A549 (cell line): ENCODE measurements at regions of chr1 and their contacts with region 1.

Region 1: DNA sequence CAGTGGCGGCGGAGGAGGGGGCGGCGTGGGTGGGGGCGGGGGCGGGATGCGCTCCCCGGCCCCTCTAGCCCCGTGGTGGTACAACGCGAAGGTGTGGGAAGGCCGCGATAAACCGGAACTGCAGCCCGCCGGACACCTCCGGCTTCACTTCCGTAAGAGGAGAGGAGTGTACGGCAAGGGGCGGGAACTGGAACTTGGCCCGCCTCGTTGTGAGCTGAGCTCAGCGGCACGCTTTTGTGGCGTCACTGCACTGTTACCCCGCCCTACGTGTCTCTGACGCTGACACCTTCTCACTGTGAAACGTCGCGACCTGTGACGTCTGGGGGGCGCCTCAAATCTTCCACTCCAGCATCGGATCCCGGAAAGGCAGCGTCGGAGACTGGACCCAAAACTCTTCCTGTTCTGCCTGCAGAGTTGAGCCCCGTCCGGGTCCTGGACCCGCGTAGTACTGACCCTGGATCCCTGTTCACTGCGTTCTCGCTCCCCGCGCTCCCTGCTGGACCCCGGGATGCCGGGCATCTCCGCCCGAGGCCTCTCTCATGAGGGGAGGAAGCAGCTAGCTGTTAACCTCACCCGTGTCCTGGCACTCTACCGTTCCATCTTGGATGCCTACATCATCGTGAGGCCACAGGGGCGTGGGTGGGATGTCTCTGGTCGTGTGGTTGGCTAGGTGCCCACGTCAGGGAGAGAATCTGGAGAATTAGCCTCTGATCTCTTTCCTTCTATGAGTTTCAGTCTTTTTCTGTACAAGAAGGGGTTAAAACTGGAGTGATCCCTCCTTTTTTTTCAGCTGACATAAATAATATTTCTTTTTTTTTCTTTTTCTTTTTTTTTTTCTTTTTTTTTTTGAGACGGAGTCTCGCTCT is at the start of gene ISG20L2:
- DNase-seq: peak; percentile 94 to 99
- ATAC-seq: peak; percentile 87 to 89
- H3K4me3 ChIP-seq: peak within 1 kb of the TSS; percentile 89
- H3K27ac ChIP-seq: peak within 1 kb of the TSS; percentile 93
- H3K4me1 ChIP-seq: peaks cover 35% of the 10 kb centered on the region
- CTCF ChIP-seq: no peak
- EP300 ChIP-seq: no peak
- POLR2A ChIP-seq: peak; percentile 29
- RAD21 ChIP-seq: no peak
- polyA plus RNA-seq, gene ISG20L2: 42.5 and 55.7 TPM in 2 replicates

Region 2: GRCh38 chr1:156338180-156338973 is 390.5 kb before region 1 on chr1 and contains the starts of genes CCT3 and TSACC:
- CTCF ChIA-PET with region 1: no interaction called
- POLR2A ChIA-PET with region 1: no interaction called
- DNase-seq: peak; percentile 99 to 100
- ATAC-seq: peak; percentile 94 to 95
- H3K4me3 ChIP-seq: peak within 1 kb of the TSS; percentile 75
- H3K27ac ChIP-seq: peak within 1 kb of the TSS; percentile 89 to 95
- H3K4me1 ChIP-seq: peaks cover 16% of the 10 kb centered on the region; the same call in 2 of the 3 replicates
- CTCF ChIP-seq: no peak
- EP300 ChIP-seq: no peak
- POLR2A ChIP-seq: peak; percentile 87
- RAD21 ChIP-seq: no peak
- polyA plus RNA-seq, gene CCT3: 528 and 530 TPM in 2 replicates
- polyA plus RNA-seq, gene TSACC: 3.9 and 4.7 TPM in 2 replicates

Region 3: DNA sequence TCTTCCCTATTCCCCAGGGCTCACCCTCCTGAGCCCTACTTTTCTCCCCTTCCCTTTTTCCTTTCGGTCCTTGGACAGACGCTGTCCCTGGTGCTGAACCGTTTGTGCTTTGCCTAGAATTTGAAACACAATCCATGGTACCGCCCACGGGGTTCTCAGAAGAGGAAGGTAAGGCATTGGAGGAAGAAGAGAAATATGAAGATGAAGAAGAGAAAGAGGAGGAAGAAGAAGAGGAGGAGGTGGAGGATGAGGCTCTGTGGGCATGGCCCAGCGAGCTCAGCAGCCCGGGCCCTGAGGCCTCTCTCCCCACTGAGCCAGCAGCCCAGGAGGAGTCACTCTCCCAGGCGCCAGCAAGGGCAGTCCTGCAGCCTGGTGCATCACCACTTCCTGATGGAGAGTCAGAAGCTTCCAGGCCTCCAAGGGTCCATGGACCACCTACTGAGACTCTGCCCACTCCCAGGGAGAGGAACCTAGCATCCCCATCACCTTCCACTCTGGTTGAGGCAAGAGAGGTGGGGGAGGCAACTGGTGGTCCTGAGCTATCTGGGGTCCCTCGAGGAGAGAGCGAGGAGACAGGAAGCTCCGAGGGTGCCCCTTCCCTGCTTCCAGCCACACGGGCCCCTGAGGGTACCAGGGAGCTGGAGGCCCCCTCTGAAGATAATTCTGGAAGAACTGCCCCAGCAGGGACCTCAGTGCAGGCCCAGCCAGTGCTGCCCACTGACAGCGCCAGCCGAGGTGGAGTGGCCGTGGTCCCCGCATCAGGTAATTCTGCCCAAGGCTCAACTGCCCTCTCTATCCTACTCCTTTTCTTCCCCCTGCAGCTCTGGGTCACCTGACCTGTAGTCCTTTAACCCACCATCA is 76.5 kb before region 1 on chr1:
- CTCF ChIA-PET with region 1: interaction called, 10 read pairs
- POLR2A ChIA-PET with region 1: no interaction called
- DNase-seq: no peak
- ATAC-seq: no peak
- H3K4me3 ChIP-seq: no peak overlapping the region
- H3K27ac ChIP-seq: no peak overlapping the region
- H3K4me1 ChIP-seq: 0 out of 3 replicates have a peak, but pooled peaks cover 7% of the 10 kb centered on the region
- CTCF ChIP-seq: no peak
- EP300 ChIP-seq: no peak
- POLR2A ChIP-seq: no peak
- RAD21 ChIP-seq: no peak

Region 4: DNA sequence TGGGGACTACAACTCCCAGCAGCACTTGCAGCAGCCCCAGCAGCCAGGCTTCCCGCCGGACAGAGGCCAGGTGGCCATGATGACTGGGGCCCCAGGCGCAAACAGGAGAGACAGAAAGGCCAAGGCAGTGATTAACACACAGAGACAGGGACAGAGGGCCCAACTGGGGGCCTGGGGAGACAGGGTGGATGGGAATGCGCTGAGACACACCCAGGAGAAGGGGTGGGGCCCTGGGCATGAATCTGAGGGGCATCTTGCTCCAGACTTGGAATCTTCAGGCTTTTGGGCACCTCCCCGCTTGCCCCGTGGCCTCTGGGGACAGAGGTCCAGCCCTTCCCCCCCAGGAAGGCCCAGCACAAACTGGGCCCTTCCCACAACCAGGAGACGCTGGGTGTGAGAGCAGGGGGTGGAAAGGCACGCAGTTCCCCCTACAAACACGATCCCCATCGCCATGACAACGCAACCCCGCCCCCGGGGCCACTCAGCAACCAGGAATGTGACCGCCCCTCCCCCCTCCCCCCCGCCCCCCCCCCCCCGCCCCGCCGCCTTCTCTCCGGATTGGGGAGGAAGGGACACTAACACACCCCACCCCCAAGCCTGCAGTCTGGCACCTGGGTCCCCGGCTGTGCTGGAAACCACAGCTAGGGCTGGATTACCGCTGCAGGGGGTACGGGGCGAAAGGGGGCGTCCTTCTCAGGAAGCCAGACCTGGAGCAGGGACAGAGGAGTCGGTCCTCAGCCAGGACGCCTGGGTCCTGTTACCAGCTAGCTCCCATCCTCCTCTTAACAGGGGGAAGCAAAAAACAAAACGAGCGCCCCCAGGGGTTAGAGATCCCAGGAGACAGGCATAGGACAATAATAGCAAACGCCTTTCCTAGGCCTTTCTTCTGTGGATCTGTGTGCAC is 18.1 kb after region 1 on chr1:
- CTCF ChIA-PET with region 1: interaction called, 130 read pairs
- POLR2A ChIA-PET with region 1: interaction called, 32 read pairs
- DNase-seq: peak; percentile 90 to 95
- ATAC-seq: peak; percentile 63 to 70
- H3K4me3 ChIP-seq: peak overlapping the region; percentile 92
- H3K27ac ChIP-seq: peak overlapping the region; percentile 99 to 100
- H3K4me1 ChIP-seq: peaks cover 45% of the 10 kb centered on the region
- CTCF ChIP-seq: peak; percentile 47
- EP300 ChIP-seq: peak in 1 of 2 experiments; percentile 64; a peak in 1 of 5 replicates
- POLR2A ChIP-seq: peak; percentile 15; the same call in 1 of the 2 replicates
- RAD21 ChIP-seq: peak in 1 of 2 experiments; percentile 3; a peak in 1 of 5 replicates

Region 5: GRCh38 chr1:156781585-156782186 is 52.9 kb after region 1 on chr1:
- CTCF ChIA-PET with region 1: interaction called, 47 read pairs
- POLR2A ChIA-PET with region 1: interaction called, 4 read pairs
- DNase-seq: peak in 1 of 2 experiments; percentile 14
- ATAC-seq: no peak
- H3K4me3 ChIP-seq: no peak overlapping the region
- H3K27ac ChIP-seq: no peak overlapping the region
- H3K4me1 ChIP-seq: peaks cover 8% of the 10 kb centered on the region; the same call in 2 of the 3 replicates
- CTCF ChIP-seq: no peak
- EP300 ChIP-seq: no peak
- POLR2A ChIP-seq: no peak
- RAD21 ChIP-seq: no peak

Region 6: GRCh38 chr1:156838981-156839410 is 110.2 kb after region 1 on chr1:
- CTCF ChIA-PET with region 1: interaction called, 12 read pairs
- POLR2A ChIA-PET with region 1: no interaction called
- DNase-seq: peak in 1 of 2 experiments; percentile 72
- ATAC-seq: peak; percentile 60 to 85; a peak in 5 of 6 replicates
- H3K4me3 ChIP-seq: no peak overlapping the region
- H3K27ac ChIP-seq: no peak overlapping the region
- H3K4me1 ChIP-seq: no peaks in the 10 kb centered on the region
- CTCF ChIP-seq: peak; percentile 81
- EP300 ChIP-seq: no peak
- POLR2A ChIP-seq: no peak
- RAD21 ChIP-seq: peak; percentile 83 to 87

Region 7: DNA sequence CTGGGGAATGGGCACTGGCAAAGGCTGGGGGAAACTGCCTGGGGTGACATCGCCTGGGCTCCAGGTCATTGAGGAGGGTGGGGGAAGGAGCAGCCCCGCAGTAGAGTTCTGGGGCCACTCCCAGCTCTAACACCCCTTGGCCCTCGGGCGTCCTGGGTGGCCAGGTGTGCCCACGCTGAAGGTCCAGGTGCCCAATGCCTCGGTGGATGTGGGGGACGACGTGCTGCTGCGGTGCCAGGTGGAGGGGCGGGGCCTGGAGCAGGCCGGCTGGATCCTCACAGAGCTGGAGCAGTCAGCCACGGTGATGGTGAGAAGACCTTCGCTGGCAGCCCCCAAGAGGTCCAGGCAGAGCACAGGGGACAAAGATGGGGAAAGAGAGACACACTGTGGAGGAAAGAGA is 139.5 kb after region 1 on chr1:
- CTCF ChIA-PET with region 1: interaction called, 11 read pairs
- POLR2A ChIA-PET with region 1: interaction called, 6 read pairs
- DNase-seq: no peak
- ATAC-seq: no peak
- H3K4me3 ChIP-seq: no peak overlapping the region
- H3K27ac ChIP-seq: no peak overlapping the region
- H3K4me1 ChIP-seq: peaks cover 13% of the 10 kb centered on the region
- CTCF ChIP-seq: no peak
- EP300 ChIP-seq: no peak
- POLR2A ChIP-seq: no peak
- RAD21 ChIP-seq: no peak

Region 8: GRCh38 chr1:156927215-156928042 is 198.6 kb after region 1 on chr1:
- CTCF ChIA-PET with region 1: interaction called, 20 read pairs
- POLR2A ChIA-PET with region 1: interaction called, 9 read pairs
- DNase-seq: peak; percentile 84 to 87
- ATAC-seq: peak; percentile 85 to 94
- H3K4me3 ChIP-seq: peak overlapping the region; percentile 46
- H3K27ac ChIP-seq: peak overlapping the region; percentile 61 to 82; a peak in 5 of 6 replicates
- H3K4me1 ChIP-seq: peaks cover 7% of the 10 kb centered on the region; the same call in 1 of the 3 replicates
- CTCF ChIP-seq: peak; percentile 82
- EP300 ChIP-seq: no peak
- POLR2A ChIP-seq: no peak
- RAD21 ChIP-seq: peak; percentile 90 to 92